MCF 10A (cell line): ENCODE measurements at regions of chr10 and their contacts with region 1.

Region 1: GRCh38 chr10:109852475-109853037 is 70.8 kb downstream of the XPNPEP1 start:
- DNase-seq: peak; percentile 82
- H3K4me3 Mint-ChIP-seq: no peak overlapping the region
- H3K27ac Mint-ChIP-seq: no peak overlapping the region
- H3K4me1 Mint-ChIP-seq: peaks cover 9% of the 10 kb centered on the region
- H3K27me3 Mint-ChIP-seq: no peaks in the 10 kb centered on the region
- CTCF ChIP-seq: peak; percentile 96

Region 2: GRCh38 chr10:109411917-109412316 is 440.6 kb before region 1 on chr10:
- CTCF ChIA-PET with region 1: interaction called, 3 read pairs
- POLR2A ChIA-PET with region 1: no interaction called
- intact Hi-C with region 1: loop called (anchors 1 kb)
- DNase-seq: peak; percentile 9
- H3K4me3 Mint-ChIP-seq: no peak overlapping the region
- H3K27ac Mint-ChIP-seq: no peak overlapping the region
- H3K4me1 Mint-ChIP-seq: no peaks in the 10 kb centered on the region
- H3K27me3 Mint-ChIP-seq: no peaks in the 10 kb centered on the region
- CTCF ChIP-seq: peak; percentile 10

Region 3: GRCh38 chr10:109784236-109784635 is 68.3 kb before region 1 on chr10:
- CTCF ChIA-PET with region 1: interaction called, 3 read pairs
- POLR2A ChIA-PET with region 1: no interaction called
- intact Hi-C with region 1: loop called (anchors 5 kb)
- DNase-seq: peak; percentile 26
- H3K4me3 Mint-ChIP-seq: no peak overlapping the region
- H3K27ac Mint-ChIP-seq: no peak overlapping the region
- H3K4me1 Mint-ChIP-seq: peaks cover 7% of the 10 kb centered on the region
- H3K27me3 Mint-ChIP-seq: no peaks in the 10 kb centered on the region
- CTCF ChIP-seq: no peak

Region 4: DNA sequence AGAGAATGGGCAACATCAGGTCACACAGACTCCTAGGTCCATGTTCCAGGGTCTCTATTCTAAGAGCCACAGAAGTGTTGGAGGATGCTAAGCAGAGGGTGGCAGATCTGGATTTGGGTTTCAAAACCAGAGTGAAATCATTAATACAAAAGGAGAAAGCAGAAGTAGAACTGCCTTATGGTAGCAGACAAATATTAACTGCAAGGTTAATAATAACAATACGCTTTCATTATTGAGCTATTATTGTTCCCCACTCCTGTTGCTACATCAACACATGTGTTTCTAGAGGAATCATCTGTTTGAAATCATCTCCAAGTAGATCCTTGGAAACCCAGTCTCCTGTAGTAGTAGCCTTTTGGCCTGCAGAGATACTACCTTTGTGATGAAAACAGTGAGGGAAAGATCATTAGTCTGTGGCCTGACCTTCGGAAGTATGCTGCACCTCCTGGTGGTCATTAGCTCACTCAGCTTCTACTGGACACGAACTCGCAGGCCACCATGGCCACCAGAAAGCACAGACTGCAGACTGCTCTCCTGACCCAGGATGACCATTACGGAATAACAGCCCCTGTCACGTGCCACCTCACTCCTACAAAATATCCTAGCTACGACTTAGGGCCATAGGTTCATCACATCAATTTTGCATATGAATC is 13.8 kb before region 1 on chr10:
- CTCF ChIA-PET with region 1: interaction called, 14 read pairs
- POLR2A ChIA-PET with region 1: no interaction called
- intact Hi-C with region 1: no loop called
- DNase-seq: no peak
- H3K4me3 Mint-ChIP-seq: no peak overlapping the region
- H3K27ac Mint-ChIP-seq: no peak overlapping the region
- H3K4me1 Mint-ChIP-seq: no peaks in the 10 kb centered on the region
- H3K27me3 Mint-ChIP-seq: no peaks in the 10 kb centered on the region
- CTCF ChIP-seq: no peak

Region 5: DNA sequence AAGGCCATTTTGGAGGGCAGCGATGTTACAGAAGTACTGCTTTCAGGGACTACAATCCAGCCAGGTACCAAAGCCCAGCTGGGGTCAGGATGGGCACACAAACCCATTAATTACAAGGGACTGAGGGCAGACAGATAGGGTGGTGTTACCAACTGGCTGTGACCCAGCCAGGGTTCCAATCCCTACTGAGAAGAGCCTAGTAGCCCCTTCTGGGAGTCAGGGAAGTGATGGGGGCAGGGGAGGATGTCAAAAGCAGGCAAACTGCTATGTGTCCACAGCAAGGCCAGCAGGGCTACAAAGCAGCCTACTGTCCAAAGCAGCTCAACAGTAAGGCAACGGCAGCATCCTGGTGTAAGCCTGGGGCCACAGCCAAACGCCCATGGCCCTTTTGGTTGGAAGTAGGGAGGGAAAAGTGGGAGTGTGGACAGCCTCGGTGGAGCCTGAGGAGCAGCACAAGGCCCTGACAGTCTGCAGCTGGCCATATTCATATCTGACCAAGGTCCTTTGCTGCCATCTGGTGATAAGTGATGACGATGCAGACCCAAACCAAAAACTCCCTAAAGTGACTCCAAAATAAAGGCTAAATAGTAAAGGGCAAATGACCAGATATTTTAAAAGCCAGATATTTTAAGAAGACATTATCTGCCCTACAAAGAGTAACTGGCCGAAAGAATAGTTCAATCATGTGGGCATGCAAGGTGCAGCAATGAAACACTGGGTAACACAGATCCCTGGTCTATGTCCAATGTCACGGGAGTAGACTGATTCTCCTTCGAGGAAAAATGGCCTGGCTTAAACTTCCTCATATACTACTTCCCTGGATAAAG is 13.8 kb after region 1 on chr10:
- CTCF ChIA-PET with region 1: interaction called, 13 read pairs
- POLR2A ChIA-PET with region 1: no interaction called
- intact Hi-C with region 1: no loop called
- DNase-seq: peak; percentile 22
- H3K4me3 Mint-ChIP-seq: no peak overlapping the region
- H3K27ac Mint-ChIP-seq: no peak overlapping the region
- H3K4me1 Mint-ChIP-seq: no peaks in the 10 kb centered on the region
- H3K27me3 Mint-ChIP-seq: no peaks in the 10 kb centered on the region
- CTCF ChIP-seq: peak; percentile 14

Region 6: DNA sequence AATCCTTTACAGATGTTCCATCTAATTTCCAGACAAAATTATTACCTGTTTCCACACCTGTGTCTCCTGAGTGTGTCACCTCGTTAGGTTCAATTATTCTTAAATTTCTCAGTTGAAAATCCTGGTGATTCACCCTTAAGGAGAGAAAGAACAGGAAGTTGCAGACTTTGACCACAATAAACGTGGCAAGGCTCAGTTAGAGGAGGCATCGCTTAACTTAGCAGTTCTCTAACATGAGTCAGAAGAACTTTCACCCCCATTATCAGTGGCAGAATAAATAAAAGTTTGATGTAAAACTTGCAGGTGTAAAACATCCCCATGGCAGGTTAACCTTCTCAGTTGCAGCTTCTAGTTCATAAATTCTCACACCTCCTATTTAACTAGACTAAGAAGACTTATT is 62.4 kb after region 1 on chr10:
- CTCF ChIA-PET with region 1: no interaction called
- POLR2A ChIA-PET with region 1: no interaction called
- intact Hi-C with region 1: no loop called
- DNase-seq: peak; percentile 88
- H3K4me3 Mint-ChIP-seq: peak overlapping the region; percentile 33
- H3K27ac Mint-ChIP-seq: peak overlapping the region; percentile 89
- H3K4me1 Mint-ChIP-seq: peaks cover 44% of the 10 kb centered on the region
- H3K27me3 Mint-ChIP-seq: no peaks in the 10 kb centered on the region
- CTCF ChIP-seq: no peak